PC-9 (cell line): ENCODE measurements at regions of chr1 and their contacts with region 1.

Region 1: DNA sequence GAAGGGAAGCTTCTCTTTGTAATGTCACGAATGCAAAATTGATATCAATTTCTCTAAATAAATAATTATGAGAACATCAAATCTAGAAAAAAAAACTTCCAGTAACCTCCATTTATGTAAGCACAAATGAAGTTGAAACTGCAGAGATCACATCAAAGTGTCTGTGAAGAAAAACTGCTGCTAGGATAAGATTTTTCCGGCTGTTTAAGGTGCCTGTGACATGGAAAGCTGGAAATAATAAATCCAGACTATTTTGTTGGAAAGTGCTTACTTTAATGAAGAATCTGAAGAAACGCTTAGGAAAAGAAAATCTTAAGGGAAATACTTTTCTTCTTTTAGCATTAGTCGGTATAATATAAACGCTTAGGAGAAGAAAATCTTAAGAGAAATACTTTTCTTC is 57.0 kb downstream of the CHRM3 start:
- DNase-seq: no peak
- H3K4me3 ChIP-seq: no peak overlapping the region
- H3K27ac ChIP-seq: no peak overlapping the region
- H3K4me1 ChIP-seq: no peaks in the 10 kb centered on the region
- H3K27me3 ChIP-seq: no peaks in the 10 kb centered on the region
- CTCF ChIP-seq: no peak

Region 2: GRCh38 chr1:238558156-238558555 is 885.2 kb before region 1 on chr1:
- CTCF ChIA-PET with region 1: interaction called, 11 read pairs
- POLR2A ChIA-PET with region 1: no interaction called
- intact Hi-C with region 1: no loop called
- DNase-seq: no peak
- H3K4me3 ChIP-seq: no peak overlapping the region
- H3K27ac ChIP-seq: no peak overlapping the region
- H3K4me1 ChIP-seq: no peaks in the 10 kb centered on the region
- H3K27me3 ChIP-seq: peaks cover 8% of the 10 kb centered on the region; the same call in 1 of the 2 replicates
- CTCF ChIP-seq: no peak